Activated CD4-positive, alpha-beta T cell treated with anti-CD3 and anti-CD28 coated beads for 36 hours (primary cell): ENCODE measurements at regions of chr20 and their contacts with region 1.

Region 1: GRCh38 chr20:5100684-5101347 is 18.9 kb downstream of the PCNA start:
- DNase-seq: peak; percentile 84
- ATAC-seq: peak; percentile 89
- H3K4me3 Mint-ChIP-seq: no peak overlapping the region
- H3K27ac Mint-ChIP-seq: no peak overlapping the region
- H3K4me1 Mint-ChIP-seq: peaks cover 5% of the 10 kb centered on the region
- H3K27me3 Mint-ChIP-seq: no peaks in the 10 kb centered on the region

Region 2: DNA sequence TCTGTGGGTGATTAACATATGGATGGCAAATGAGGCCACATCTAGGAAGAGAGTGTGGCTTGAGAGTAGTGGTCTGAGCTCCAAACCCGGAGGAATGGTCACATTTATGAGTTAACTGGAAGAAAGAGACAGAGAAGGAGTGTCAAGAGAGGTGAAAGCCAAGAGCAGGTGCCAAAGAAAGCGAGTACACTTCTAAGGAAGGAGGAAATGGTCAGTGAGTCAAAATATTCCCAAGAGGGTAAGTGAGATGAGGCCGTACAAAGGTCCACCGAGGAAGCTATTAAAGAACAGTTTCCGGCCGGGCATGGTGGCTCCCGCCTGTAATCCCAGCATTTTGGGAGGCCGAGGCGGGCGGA is 981.0 kb before region 1 on chr20:
- CTCF ChIA-PET with region 1: no interaction called
- POLR2A ChIA-PET with region 1: no interaction called
- intact Hi-C with region 1: no loop called
- DNase-seq: no peak
- ATAC-seq: no peak
- H3K4me3 Mint-ChIP-seq: no peak overlapping the region
- H3K27ac Mint-ChIP-seq: no peak overlapping the region
- H3K4me1 Mint-ChIP-seq: no peaks in the 10 kb centered on the region
- H3K27me3 Mint-ChIP-seq: peaks cover 12% of the 10 kb centered on the region

Region 3: DNA sequence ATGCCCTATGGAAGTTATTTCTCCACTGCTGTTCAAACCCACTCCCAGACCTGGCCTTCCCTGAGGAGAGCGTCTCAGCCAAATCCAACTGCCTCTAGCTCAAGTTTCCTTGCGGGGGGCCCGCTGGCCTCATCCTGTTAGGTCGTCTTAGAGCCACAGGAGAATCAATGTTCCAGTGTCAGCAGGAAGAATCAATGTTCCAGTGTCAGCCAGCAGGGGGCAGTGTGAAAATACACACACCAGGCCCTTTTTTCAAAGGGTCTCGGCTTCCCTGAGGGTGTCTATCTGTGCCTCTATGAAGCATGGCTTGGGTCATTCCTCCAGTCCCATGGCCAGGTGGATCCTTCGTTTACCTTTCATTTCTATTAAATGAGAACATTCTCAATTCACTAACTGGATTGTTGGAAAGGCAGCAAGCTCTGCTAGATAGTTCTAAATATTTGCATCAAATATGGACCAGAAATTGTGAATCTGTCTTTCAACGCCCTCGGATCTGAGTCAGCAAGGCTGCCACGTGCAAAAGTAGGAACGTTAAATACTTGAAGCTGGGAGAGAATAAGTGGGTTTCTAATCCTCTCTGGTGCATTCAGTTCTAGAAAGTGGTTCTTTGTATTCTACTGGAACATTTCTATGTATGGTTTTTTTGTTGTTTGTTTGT is 359.9 kb before region 1 on chr20:
- CTCF ChIA-PET with region 1: interaction called, 4 read pairs
- POLR2A ChIA-PET with region 1: no interaction called
- intact Hi-C with region 1: loop called in 1 of 2 experiments (anchors 5 kb)
- DNase-seq: peak; percentile 82
- ATAC-seq: peak; percentile 61
- H3K4me3 Mint-ChIP-seq: no peak overlapping the region
- H3K27ac Mint-ChIP-seq: no peak overlapping the region
- H3K4me1 Mint-ChIP-seq: peaks cover 3% of the 10 kb centered on the region
- H3K27me3 Mint-ChIP-seq: peaks cover 5% of the 10 kb centered on the region

Region 4: DNA sequence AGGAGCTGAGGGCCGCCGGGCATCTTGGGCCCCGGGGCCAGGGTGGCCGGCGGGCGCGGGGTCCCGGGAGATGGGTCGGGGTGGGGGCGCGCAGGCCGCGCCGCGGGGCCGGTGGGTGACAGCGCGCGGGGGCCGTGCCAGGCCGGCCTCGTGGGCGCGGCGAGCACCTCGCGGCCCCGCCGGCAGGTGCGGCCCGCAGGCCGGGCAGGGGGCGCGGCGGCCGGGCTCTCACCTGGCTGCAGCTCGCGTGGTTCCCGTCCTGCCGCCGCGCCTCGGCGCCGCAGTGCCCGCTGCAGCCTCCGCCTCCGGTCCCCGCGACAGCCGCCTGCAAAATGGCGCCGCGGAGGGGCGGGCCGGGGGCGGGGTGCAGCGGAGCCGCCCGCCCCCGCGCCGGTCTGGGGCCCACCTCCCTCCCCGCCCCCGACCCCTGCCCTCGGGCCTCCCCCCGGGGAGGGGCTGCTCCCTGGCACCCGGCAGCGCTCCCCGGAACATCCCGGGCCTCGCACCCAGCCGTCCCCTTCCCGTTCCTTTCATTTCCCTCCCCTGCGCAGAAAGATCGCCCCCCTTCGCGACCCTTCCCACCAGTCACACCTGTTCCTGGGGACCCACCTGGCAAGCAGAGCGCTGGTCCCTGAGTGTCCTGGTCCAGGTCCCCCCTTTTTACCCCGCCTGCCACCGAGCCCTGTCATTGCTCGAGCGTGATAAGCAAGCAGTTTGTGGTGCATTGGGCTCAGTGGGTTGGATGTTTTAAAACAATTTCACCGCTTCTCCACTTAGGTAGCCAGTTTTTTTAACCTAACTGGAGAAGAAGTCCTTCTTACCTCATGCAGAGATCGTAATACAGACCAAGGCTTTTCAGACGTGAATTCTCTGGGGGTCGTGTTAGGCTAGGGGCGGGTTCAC is 99.4 kb before region 1 on chr20 and contains the start of gene SLC23A2:
- CTCF ChIA-PET with region 1: interaction called, 4 read pairs
- POLR2A ChIA-PET with region 1: no interaction called
- intact Hi-C with region 1: loop called in 1 of 2 experiments (anchors 10 kb)
- DNase-seq: peak; percentile 75
- ATAC-seq: peak; percentile 73
- H3K4me3 Mint-ChIP-seq: peak within 1 kb of the TSS; percentile 82
- H3K27ac Mint-ChIP-seq: peak within 1 kb of the TSS; percentile 83
- H3K4me1 Mint-ChIP-seq: peaks cover 29% of the 10 kb centered on the region
- H3K27me3 Mint-ChIP-seq: no peaks in the 10 kb centered on the region
- total RNA-seq, gene SLC23A2: 16.7 to 17.6 TPM

Region 5: GRCh38 chr20:5078399-5078958 is 22.3 kb before region 1 on chr20:
- CTCF ChIA-PET with region 1: interaction called, 21 read pairs
- POLR2A ChIA-PET with region 1: no interaction called
- intact Hi-C with region 1: loop called (anchors 2 kb)
- DNase-seq: peak; percentile 90
- ATAC-seq: peak; percentile 95
- H3K4me3 Mint-ChIP-seq: peak overlapping the region; percentile 58
- H3K27ac Mint-ChIP-seq: peak overlapping the region; percentile 93
- H3K4me1 Mint-ChIP-seq: peaks cover 38% of the 10 kb centered on the region
- H3K27me3 Mint-ChIP-seq: no peaks in the 10 kb centered on the region

Region 6: GRCh38 chr20:5119435-5120188 is 18.8 kb after region 1 on chr20 and contains the start of gene PCNA:
- CTCF ChIA-PET with region 1: interaction called, 10 read pairs
- POLR2A ChIA-PET with region 1: interaction called, 3 read pairs
- intact Hi-C with region 1: no loop called
- DNase-seq: peak; percentile 99
- ATAC-seq: peak; percentile 91
- H3K4me3 Mint-ChIP-seq: peak within 1 kb of the TSS; percentile 92
- H3K27ac Mint-ChIP-seq: peak within 1 kb of the TSS; percentile 98
- H3K4me1 Mint-ChIP-seq: peaks cover 42% of the 10 kb centered on the region
- H3K27me3 Mint-ChIP-seq: no peaks in the 10 kb centered on the region
- total RNA-seq, gene PCNA: 494 to 576 TPM